ENCODE measurements at regions of chr1 and their contacts with region 1.

Region 1: GRCh38 chr1:37486680-37487618 is 12.6 kb downstream of the ZC3H12A start:
- DNase-seq: peak; percentile 83
- ATAC-seq: peak; percentile 89
- H3K4me3 ChIP-seq: no peak overlapping the region
- H3K4me3 Mint-ChIP-seq: no peak overlapping the region
- H3K27ac ChIP-seq: peak overlapping the region; percentile 16 to 66
- H3K27ac Mint-ChIP-seq: peak overlapping the region; percentile 86
- H3K4me1 ChIP-seq: peaks cover 11 to 14% of the 10 kb centered on the region in 2 donors
- H3K4me1 Mint-ChIP-seq: peaks cover 24% of the 10 kb centered on the region
- H3K27me3 ChIP-seq: no peaks in the 10 kb centered on the region
- H3K27me3 Mint-ChIP-seq: no peaks in the 10 kb centered on the region
- CTCF ChIP-seq: peak; percentile 97

Region 2: DNA sequence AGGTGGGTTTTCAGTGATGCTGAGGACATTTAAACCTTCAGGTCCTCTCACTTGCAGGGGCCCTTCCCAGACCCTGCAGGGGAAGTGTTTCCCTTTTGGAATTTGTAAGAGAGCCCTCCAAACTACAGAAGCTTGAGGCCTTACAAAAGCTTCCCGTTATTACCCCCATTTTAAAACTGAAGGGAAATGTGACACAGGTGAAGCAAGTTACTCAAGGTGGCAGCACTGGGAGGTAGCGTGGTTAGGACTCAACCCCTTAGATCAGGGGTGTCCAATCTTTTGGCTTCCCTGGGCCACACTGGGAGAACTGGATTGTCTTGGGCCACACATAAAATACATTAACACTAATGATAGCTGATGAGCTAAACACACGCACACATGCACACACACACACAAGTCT is 28.4 kb before region 1 on chr1:
- CTCF ChIA-PET with region 1: interaction called, 690 read pairs
- POLR2A ChIA-PET with region 1: interaction called, 8 read pairs
- intact Hi-C with region 1: loop called (anchors 1 kb)
- DNase-seq: no peak
- ATAC-seq: no peak
- H3K4me3 ChIP-seq: no peak overlapping the region
- H3K4me3 Mint-ChIP-seq: no peak overlapping the region
- H3K27ac ChIP-seq: no peak overlapping the region
- H3K27ac Mint-ChIP-seq: no peak overlapping the region
- H3K4me1 ChIP-seq: peaks cover 0 to 6% of the 10 kb centered on the region in 2 donors
- H3K4me1 Mint-ChIP-seq: peaks cover 4% of the 10 kb centered on the region
- H3K27me3 ChIP-seq: peaks cover 0 to 2% (median 0%) of the 10 kb centered on the region in 4 experiments
- H3K27me3 Mint-ChIP-seq: no peaks in the 10 kb centered on the region
- CTCF ChIP-seq: no peak

Region 3: DNA sequence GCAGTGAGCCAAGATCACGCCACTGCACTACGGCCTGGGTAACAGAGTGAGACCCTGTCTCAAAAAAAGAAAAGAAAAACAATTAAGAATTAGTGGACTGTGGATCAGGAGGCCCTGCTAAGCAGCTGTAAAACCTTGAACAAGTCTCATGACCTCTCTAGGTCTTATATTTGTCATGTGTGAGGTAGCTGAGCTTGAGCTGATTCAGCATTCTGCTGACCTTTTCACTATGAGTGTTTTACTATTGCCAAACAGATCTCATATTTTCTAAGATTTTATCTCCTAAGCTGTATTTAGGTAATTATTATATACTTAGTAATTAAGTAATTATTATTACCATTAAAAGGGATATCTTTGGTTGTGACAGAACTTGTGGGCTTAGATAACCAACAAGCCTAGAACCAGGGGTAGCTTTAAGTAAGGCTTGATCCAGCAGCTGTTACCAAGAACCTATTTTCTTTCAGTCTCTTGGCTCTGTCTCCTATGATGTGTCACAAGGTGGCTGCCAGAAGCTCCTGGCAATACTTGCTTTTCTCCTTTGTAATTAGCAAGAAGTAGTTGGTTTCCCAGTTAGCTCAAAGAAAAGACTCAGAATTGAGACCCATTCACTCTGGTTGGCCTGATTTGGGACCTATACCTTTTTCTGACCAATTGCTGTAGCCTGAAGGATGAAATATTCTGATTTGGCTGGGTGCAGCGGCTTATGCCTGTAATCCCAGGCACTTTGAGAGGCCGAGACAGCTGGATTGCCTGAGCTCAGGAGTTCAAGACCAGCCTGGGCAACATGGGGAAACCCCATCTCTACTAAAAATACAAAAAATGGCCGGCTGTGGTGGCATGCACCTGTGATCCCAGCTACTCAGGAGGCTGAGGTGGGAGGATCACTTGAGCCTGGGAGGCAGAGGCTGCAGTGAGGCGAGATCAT is 21.1 kb before region 1 on chr1:
- CTCF ChIA-PET with region 1: interaction called, 690 read pairs
- POLR2A ChIA-PET with region 1: no interaction called
- intact Hi-C with region 1: no loop called
- DNase-seq: no peak
- ATAC-seq: no peak
- H3K4me3 ChIP-seq: no peak overlapping the region
- H3K4me3 Mint-ChIP-seq: no peak overlapping the region
- H3K27ac ChIP-seq: no peak overlapping the region
- H3K27ac Mint-ChIP-seq: no peak overlapping the region
- H3K4me1 ChIP-seq: no peaks in the 10 kb centered on the region
- H3K4me1 Mint-ChIP-seq: no peaks in the 10 kb centered on the region
- H3K27me3 ChIP-seq: no peaks in the 10 kb centered on the region
- H3K27me3 Mint-ChIP-seq: peaks cover 5% of the 10 kb centered on the region
- CTCF ChIP-seq: no peak

Region 4: GRCh38 chr1:37474046-37474759 is 12.7 kb before region 1 on chr1 and contains the start of gene ZC3H12A:
- CTCF ChIA-PET with region 1: interaction called, 201 read pairs
- POLR2A ChIA-PET with region 1: interaction called, 28 read pairs
- intact Hi-C with region 1: loop called (anchors 1 kb)
- DNase-seq: peak; percentile 96
- ATAC-seq: peak; percentile 69
- H3K4me3 ChIP-seq: peak within 1 kb of the TSS; percentile 94 to 99 (median 98)
- H3K4me3 Mint-ChIP-seq: peak within 1 kb of the TSS; percentile 100
- H3K27ac ChIP-seq: peak within 1 kb of the TSS; percentile 96 to 97
- H3K27ac Mint-ChIP-seq: peak within 1 kb of the TSS; percentile 98
- H3K4me1 ChIP-seq: peaks cover 23 to 50% of the 10 kb centered on the region in 2 donors
- H3K4me1 Mint-ChIP-seq: peaks cover 51% of the 10 kb centered on the region
- H3K27me3 ChIP-seq: peaks cover 0 to 6% (median 0%) of the 10 kb centered on the region in 4 experiments
- H3K27me3 Mint-ChIP-seq: peaks cover 7% of the 10 kb centered on the region
- CTCF ChIP-seq: no peak
- total RNA-seq, gene ZC3H12A: 67.9 and 73.0 TPM in 2 replicates

Region 5: DNA sequence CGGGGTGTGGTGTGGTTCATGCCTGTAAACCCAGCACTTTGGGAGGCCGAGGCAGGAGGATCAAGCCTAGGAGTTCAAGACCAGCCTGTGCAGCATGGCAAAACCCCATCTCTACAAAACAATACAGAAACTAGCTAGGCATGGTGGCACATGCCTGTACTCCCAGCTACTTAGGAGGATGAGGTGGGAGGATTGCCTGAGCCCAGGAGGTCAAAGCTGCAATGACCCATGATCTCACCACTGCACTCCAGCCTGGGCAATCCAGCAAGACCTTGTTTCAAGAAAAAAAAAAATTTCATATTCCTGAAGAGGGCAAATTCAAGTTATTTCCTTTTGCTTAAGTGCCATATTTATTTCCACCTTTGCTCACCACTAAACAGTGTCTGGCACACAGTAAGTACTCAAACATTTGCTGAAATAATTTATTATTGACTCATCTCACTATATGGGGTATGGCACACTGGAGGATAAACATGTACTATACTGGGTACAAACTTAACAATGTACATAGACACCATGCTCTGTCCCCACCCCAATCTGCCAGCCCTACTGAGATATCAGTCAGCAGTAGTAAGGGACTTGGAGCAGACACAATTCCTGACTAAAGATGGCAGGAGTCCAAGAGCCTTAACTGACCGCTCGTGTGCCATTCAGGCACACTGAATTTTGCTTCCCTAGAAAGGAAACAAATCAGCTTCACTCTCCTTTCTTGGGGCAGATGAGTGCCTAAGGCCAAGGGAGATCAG is 12.1 kb after region 1 on chr1:
- CTCF ChIA-PET with region 1: interaction called, 56 read pairs
- POLR2A ChIA-PET with region 1: no interaction called
- intact Hi-C with region 1: no loop called
- DNase-seq: no peak
- ATAC-seq: no peak
- H3K4me3 ChIP-seq: no peak overlapping the region
- H3K4me3 Mint-ChIP-seq: no peak overlapping the region
- H3K27ac ChIP-seq: no peak overlapping the region
- H3K27ac Mint-ChIP-seq: no peak overlapping the region
- H3K4me1 ChIP-seq: no peaks in the 10 kb centered on the region
- H3K4me1 Mint-ChIP-seq: no peaks in the 10 kb centered on the region
- H3K27me3 ChIP-seq: no peaks in the 10 kb centered on the region
- H3K27me3 Mint-ChIP-seq: no peaks in the 10 kb centered on the region
- CTCF ChIP-seq: no peak

Region 6: DNA sequence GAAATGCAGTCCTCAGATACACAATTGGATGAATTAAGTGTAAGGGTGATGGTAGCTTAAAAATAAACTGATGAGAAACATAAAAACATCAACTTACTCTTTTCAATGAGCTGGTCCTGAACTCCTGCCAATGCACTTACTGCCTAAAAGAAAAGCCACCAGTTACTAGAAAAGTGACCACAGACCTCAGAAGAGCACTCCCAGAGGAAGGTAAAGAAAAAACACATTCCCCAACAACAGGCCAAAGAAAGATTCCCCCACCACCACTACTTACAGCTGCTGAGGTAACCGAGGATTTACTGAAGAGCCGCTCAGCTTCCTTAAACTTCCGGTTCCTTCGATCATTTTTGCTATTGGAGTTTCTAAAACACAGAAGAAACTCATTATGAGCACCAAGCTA is 22.2 kb after region 1 on chr1:
- CTCF ChIA-PET with region 1: interaction called, 33 read pairs
- POLR2A ChIA-PET with region 1: no interaction called
- intact Hi-C with region 1: no loop called
- DNase-seq: no peak
- ATAC-seq: no peak
- H3K4me3 ChIP-seq: no peak overlapping the region
- H3K4me3 Mint-ChIP-seq: no peak overlapping the region
- H3K27ac ChIP-seq: peak overlapping the region in 1 of 2 donors; percentile 67
- H3K27ac Mint-ChIP-seq: peak overlapping the region; percentile 67
- H3K4me1 ChIP-seq: peaks cover 23 to 26% of the 10 kb centered on the region in 2 donors
- H3K4me1 Mint-ChIP-seq: peaks cover 38% of the 10 kb centered on the region
- H3K27me3 ChIP-seq: no peaks in the 10 kb centered on the region
- H3K27me3 Mint-ChIP-seq: no peaks in the 10 kb centered on the region
- CTCF ChIP-seq: no peak

Region 7: DNA sequence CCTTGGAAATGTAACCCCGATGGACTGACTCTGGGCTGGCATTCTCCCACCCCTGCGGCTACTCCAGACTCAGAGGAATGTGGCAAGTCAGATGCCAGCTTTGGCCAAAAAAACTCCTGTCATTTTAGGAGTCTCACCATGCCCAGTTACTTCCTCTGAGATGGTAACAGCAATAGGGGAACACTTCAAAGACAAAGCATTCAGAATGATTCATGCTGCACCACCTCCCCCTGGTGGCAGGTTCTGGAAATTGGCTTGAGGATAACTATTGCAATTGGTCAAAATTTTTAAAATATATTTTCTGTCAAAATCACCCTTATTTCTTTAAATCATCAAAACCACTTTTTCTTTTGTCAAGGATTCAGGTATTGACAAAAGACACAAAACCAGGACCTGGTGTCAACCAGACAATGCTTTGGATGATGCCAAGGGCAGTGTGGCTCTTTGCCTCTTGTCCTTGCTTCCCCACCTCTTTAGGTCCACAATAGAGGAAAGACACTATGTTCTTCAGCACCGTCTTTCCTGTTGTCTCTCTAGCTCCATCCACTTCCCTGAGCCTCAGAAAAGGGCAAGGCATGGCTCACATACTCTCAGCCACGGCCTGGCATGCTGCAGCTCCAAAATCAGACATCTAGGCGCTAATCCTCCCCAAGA is 195.5 kb after region 1 on chr1:
- CTCF ChIA-PET with region 1: interaction called, 35 read pairs
- POLR2A ChIA-PET with region 1: interaction called, 3 read pairs
- intact Hi-C with region 1: loop called (anchors 1 kb)
- DNase-seq: peak; percentile 81
- ATAC-seq: peak; percentile 84
- H3K4me3 ChIP-seq: no peak overlapping the region
- H3K4me3 Mint-ChIP-seq: no peak overlapping the region
- H3K27ac ChIP-seq: peak overlapping the region; percentile 15 to 66
- H3K27ac Mint-ChIP-seq: peak overlapping the region; percentile 84
- H3K4me1 ChIP-seq: peaks cover 3 to 11% of the 10 kb centered on the region in 2 donors
- H3K4me1 Mint-ChIP-seq: peaks cover 7% of the 10 kb centered on the region
- H3K27me3 ChIP-seq: no peaks in the 10 kb centered on the region
- H3K27me3 Mint-ChIP-seq: no peaks in the 10 kb centered on the region
- CTCF ChIP-seq: peak; percentile 94

Region 8: GRCh38 chr1:37741130-37741529 is 254.2 kb after region 1 on chr1:
- CTCF ChIA-PET with region 1: no interaction called
- POLR2A ChIA-PET with region 1: no interaction called
- intact Hi-C with region 1: no loop called
- DNase-seq: no peak
- ATAC-seq: no peak
- H3K4me3 ChIP-seq: no peak overlapping the region
- H3K4me3 Mint-ChIP-seq: no peak overlapping the region
- H3K27ac ChIP-seq: no peak overlapping the region
- H3K27ac Mint-ChIP-seq: no peak overlapping the region
- H3K4me1 ChIP-seq: no peaks in the 10 kb centered on the region
- H3K4me1 Mint-ChIP-seq: no peaks in the 10 kb centered on the region
- H3K27me3 ChIP-seq: peaks cover 0 to 17% (median 10%) of the 10 kb centered on the region in 4 experiments
- H3K27me3 Mint-ChIP-seq: peaks cover 48% of the 10 kb centered on the region
- CTCF ChIP-seq: no peak

Region 9: GRCh38 chr1:37797750-37798345 is 310.9 kb after region 1 on chr1:
- CTCF ChIA-PET with region 1: no interaction called
- POLR2A ChIA-PET with region 1: no interaction called
- intact Hi-C with region 1: no loop called
- DNase-seq: no peak
- ATAC-seq: no peak
- H3K4me3 ChIP-seq: no peak overlapping the region
- H3K4me3 Mint-ChIP-seq: no peak overlapping the region
- H3K27ac ChIP-seq: no peak overlapping the region
- H3K27ac Mint-ChIP-seq: no peak overlapping the region
- H3K4me1 ChIP-seq: peaks cover 15 to 18% of the 10 kb centered on the region in 2 donors
- H3K4me1 Mint-ChIP-seq: peaks cover 16% of the 10 kb centered on the region
- H3K27me3 ChIP-seq: peaks cover 0 to 9% (median 0%) of the 10 kb centered on the region in 4 experiments
- H3K27me3 Mint-ChIP-seq: no peaks in the 10 kb centered on the region
- CTCF ChIP-seq: no peak

Region 10: GRCh38 chr1:38246955-38247952 is 760.3 kb after region 1 on chr1:
- CTCF ChIA-PET with region 1: no interaction called
- POLR2A ChIA-PET with region 1: no interaction called
- intact Hi-C with region 1: no loop called
- DNase-seq: no peak
- ATAC-seq: no peak
- H3K4me3 ChIP-seq: no peak overlapping the region
- H3K4me3 Mint-ChIP-seq: no peak overlapping the region
- H3K27ac ChIP-seq: no peak overlapping the region
- H3K27ac Mint-ChIP-seq: no peak overlapping the region
- H3K4me1 ChIP-seq: no peaks in the 10 kb centered on the region
- H3K4me1 Mint-ChIP-seq: no peaks in the 10 kb centered on the region
- H3K27me3 ChIP-seq: peaks cover 0 to 6% (median 1%) of the 10 kb centered on the region in 4 experiments
- H3K27me3 Mint-ChIP-seq: peaks cover 24% of the 10 kb centered on the region
- CTCF ChIP-seq: no peak

Measured in B cell (primary cell).